AG04450 (cell line): ENCODE measurements at regions of chr18 and their contacts with region 1.

Region 1: DNA sequence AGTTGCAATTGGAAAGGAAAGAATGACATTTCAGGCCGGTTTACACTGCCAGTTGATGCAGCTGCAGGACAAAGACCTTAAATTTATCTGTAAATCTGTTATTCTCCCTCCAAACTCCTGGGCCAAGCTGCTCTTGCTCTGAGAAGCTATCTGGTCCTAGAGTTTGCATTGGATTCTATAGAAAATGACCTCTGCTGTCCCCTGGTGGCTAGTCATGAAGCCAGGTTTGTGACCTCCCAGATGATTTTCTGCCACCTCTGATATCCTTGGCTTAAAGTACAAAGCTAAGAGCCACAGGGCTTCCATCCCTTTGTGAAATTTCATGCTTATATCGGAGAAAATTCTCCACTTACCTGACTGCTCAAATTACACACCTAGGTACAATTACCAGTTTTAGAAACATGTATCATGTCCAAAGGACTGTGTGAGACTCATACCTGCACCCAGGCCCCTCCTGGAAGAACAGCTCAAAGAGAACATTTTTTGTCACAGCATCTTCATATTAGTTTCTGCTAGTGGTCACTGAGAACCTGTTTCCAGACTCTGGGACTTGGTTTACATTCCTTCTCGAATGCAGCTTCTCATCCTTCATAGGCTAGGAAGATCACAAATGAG is 28.9 kb upstream of the IER3IP1 start:
- DNase-seq: peak; percentile 3
- H3K4me3 ChIP-seq: no peak overlapping the region
- H3K27ac ChIP-seq: no peak overlapping the region
- H3K27me3 ChIP-seq: peaks cover 3% of the 10 kb centered on the region
- CTCF ChIP-seq: peak; percentile 93

Region 2: DNA sequence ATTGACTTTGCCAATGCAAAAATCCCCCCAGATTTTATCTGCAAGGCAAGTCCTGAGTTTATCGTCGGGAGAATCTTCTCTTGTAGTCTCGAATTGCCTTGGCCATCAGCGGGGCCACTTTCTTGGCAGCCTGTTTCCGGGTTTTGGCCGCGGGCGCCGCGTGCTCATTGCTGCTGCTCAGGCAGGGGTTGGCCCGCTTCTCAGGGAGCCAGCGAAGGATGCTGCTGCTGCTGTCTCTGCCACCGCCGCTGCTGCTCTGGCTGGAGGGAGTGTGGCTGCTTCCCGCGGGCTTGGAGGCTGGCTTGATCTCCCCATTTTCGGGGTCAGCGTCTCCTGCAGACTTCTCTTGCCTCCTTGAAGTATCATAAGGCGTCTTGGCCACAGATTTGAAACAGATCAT is 172.1 kb before region 1 on chr18:
- CTCF ChIA-PET with region 1: no interaction called
- POLR2A ChIA-PET with region 1: no interaction called
- DNase-seq: no peak
- H3K4me3 ChIP-seq: no peak overlapping the region
- H3K27ac ChIP-seq: no peak overlapping the region
- H3K27me3 ChIP-seq: no peaks in the 10 kb centered on the region
- CTCF ChIP-seq: no peak

Region 3: GRCh38 chr18:47050468-47050867 is 154.5 kb before region 1 on chr18:
- CTCF ChIA-PET with region 1: interaction called, 23 read pairs
- POLR2A ChIA-PET with region 1: no interaction called
- DNase-seq: peak; percentile 8
- H3K4me3 ChIP-seq: no peak overlapping the region
- H3K27ac ChIP-seq: no peak overlapping the region
- H3K27me3 ChIP-seq: peaks cover 2% of the 10 kb centered on the region
- CTCF ChIP-seq: peak; percentile 78

Region 4: DNA sequence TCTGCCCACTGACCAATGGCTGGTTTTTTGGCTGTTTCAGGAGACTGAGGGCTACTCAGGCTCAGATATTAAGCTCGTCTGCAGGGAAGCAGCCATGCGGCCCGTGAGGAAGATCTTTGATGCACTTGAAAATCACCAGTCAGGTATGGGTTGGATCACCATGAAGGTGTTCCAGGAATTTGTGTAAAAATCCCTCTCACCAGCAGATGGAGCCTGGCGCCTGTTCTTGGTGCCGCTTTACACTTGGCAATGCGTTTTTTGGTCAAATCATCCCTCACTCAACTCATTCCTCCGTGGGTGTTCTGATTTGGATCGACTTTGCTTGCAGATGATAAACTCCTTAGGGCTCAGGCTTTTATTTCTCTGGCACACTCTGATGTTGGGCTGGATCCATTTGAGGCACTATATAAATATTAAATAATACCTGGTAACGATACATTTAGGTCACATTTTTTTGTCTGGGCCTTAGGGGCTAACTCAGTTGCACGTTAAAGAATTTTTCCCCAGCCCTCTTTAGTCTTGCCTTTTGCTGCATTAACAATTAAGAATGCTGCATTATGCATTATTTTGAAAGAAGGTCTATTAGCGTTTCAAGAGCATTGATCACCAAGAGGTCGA is 104.7 kb before region 1 on chr18:
- CTCF ChIA-PET with region 1: interaction called, 114 read pairs
- POLR2A ChIA-PET with region 1: no interaction called
- DNase-seq: peak; percentile 32
- H3K4me3 ChIP-seq: no peak overlapping the region
- H3K27ac ChIP-seq: no peak overlapping the region
- H3K27me3 ChIP-seq: no peaks in the 10 kb centered on the region
- CTCF ChIP-seq: peak; percentile 92

Region 5: GRCh38 chr18:47113796-47114540 is 91.0 kb before region 1 on chr18:
- CTCF ChIA-PET with region 1: interaction called, 13 read pairs
- POLR2A ChIA-PET with region 1: no interaction called
- DNase-seq: no peak
- H3K4me3 ChIP-seq: no peak overlapping the region
- H3K27ac ChIP-seq: no peak overlapping the region
- H3K27me3 ChIP-seq: no peaks in the 10 kb centered on the region
- CTCF ChIP-seq: no peak

Region 6: GRCh38 chr18:47120428-47120827 is 84.6 kb before region 1 on chr18:
- CTCF ChIA-PET with region 1: interaction called, 11 read pairs
- POLR2A ChIA-PET with region 1: no interaction called
- DNase-seq: no peak
- H3K4me3 ChIP-seq: no peak overlapping the region
- H3K27ac ChIP-seq: no peak overlapping the region
- H3K27me3 ChIP-seq: no peaks in the 10 kb centered on the region
- CTCF ChIP-seq: no peak

Region 7: DNA sequence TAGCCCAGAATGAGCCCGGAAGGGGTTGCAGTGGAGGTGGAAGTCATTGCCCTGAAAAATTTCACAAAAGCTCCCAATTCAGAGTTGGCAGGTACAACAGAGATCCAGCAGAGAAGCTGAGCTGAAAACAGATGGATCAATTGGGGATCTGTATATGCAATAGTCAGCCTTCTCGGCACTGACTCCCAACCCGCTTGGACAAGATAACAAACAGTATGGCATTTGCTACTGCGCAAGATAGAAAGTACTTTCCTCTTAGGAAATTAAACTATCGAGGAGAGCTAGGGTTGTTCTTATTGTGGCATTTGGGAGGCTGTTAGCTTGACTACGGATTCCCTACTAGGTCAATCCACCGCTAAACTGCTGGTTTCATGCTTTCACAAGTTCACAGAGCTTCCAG is 17.3 kb before region 1 on chr18:
- CTCF ChIA-PET with region 1: interaction called, 27 read pairs
- POLR2A ChIA-PET with region 1: no interaction called
- DNase-seq: no peak
- H3K4me3 ChIP-seq: no peak overlapping the region
- H3K27ac ChIP-seq: no peak overlapping the region
- H3K27me3 ChIP-seq: peaks cover 2% of the 10 kb centered on the region
- CTCF ChIP-seq: no peak

Region 8: GRCh38 chr18:47215554-47216138 is 10.6 kb after region 1 on chr18:
- CTCF ChIA-PET with region 1: interaction called, 27 read pairs
- POLR2A ChIA-PET with region 1: no interaction called
- DNase-seq: peak; percentile 2
- H3K4me3 ChIP-seq: no peak overlapping the region
- H3K27ac ChIP-seq: no peak overlapping the region
- H3K27me3 ChIP-seq: no peaks in the 10 kb centered on the region
- CTCF ChIP-seq: peak; percentile 48